Heart left ventricle (tissue), 16 donors: ENCODE measurements at regions of chr4 and their contacts with region 1.

Region 1: DNA sequence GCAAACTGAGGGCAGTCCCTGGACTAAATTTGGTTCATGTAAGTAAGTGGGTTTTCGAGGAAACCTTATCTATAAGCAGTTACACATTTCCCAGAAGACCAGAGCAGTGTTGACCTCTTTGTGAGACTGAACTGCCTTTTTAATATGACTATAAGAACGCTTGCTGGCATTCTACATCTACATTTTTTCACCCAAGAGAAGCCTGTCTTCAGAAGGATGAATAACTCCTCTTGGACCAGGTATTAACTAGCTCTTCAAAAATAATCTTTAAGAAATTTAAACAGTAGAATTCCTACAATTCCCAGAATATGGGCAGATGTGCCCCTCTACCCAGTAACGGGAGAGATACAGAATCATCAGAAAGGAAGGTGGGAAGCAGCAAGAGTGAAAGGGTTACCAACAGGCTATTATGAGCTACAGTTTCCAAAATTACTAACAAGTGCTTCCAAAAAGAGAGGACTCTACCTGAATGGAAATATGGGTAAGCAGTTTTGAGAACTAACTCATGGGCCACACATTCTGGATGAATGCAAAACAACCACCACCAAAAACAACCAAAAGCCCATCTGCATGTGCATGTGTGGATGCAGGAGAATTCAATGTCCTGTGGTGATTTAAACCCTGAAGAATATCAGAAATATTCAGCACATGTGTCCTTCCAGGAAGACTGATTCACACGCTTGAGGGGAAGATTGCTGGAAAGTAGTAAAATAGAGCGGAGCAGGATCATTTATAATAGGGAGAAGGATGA is 17.4 kb downstream of the BBS12 start:
- DNase-seq: no peak
- ATAC-seq: no peak
- H3K4me3 ChIP-seq: no peak overlapping the region
- H3K27ac ChIP-seq: no peak overlapping the region
- H3K4me1 ChIP-seq: peaks cover 0 to 14% (median 0%) of the 10 kb centered on the region in 12 donors
- H3K27me3 ChIP-seq: peaks cover 0 to 6% (median 0%) of the 10 kb centered on the region in 9 donors
- CTCF ChIP-seq: no peak
- POLR2A ChIP-seq: no peak

Region 2: GRCh38 chr4:122898370-122899150 is 148.7 kb after region 1 on chr4:
- intact Hi-C with region 1: no loop called
- DNase-seq: no peak
- ATAC-seq: peak in 1 of 4 donors; percentile 64
- H3K4me3 ChIP-seq: no peak overlapping the region
- H3K27ac ChIP-seq: no peak overlapping the region
- H3K4me1 ChIP-seq: peaks cover 0 to 6% (median 0%) of the 10 kb centered on the region in 12 donors
- H3K27me3 ChIP-seq: no peaks in the 10 kb centered on the region
- CTCF ChIP-seq: no peak
- POLR2A ChIP-seq: no peak

Region 3: DNA sequence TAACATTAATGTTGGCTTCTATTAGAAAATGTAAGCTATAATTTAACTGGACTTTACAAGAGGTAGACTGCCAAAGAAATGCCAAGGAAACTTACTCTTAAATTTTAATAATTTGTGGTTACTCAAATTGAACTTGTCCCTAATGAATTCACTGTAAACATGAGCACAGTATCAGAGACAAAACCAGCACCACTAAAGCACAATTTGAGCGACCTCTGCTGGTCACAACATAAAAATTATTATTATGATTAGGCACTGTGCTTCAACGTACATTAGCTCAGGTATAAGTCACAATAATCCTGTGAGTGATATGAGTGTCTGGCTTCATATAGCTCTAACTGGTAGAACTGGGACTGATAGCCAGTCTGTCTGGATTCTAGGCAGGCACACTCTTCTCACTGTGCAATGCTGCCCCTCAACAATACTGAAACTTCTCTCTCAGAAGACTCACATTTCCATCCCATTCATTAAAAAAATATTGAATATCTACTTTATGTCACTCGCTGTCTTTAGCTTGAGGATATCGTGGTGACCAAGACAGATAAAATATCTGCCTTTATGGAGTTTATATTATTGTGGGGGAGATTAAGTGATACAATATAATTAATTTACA is 164.5 kb after region 1 on chr4:
- intact Hi-C with region 1: loop called in 4 of 10 experiments (anchors 5 kb)
- DNase-seq: no peak
- ATAC-seq: peak in 2 of 4 donors; percentile 46 to 52
- H3K4me3 ChIP-seq: no peak overlapping the region
- H3K27ac ChIP-seq: no peak overlapping the region
- H3K4me1 ChIP-seq: no peaks in the 10 kb centered on the region
- H3K27me3 ChIP-seq: no peaks in the 10 kb centered on the region
- CTCF ChIP-seq: peak in 11 of 12 donors; percentile 13 to 62 (median 37)
- POLR2A ChIP-seq: no peak

Region 4: DNA sequence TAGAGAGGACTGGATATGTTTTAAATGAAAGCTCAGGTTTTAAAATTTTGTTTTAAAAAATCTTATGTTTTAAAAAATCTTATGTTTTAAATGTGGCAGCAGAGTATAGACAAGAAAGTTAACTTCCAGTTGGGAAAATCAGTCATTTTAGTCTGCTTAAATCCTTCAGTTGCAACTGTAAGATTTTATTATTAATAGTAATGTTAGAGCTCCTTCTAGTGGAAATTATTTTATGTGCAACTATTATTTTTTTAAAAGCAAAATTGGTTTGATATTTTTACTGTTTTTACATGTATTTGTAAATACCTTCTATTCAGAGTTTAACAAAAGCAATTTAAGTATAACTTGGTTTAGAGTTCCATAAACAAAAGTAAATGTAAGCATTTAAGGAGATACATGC is 181.0 kb after region 1 on chr4:
- intact Hi-C with region 1: loop called in 1 of 10 experiments (anchors 5 kb)
- DNase-seq: no peak
- ATAC-seq: no peak
- H3K4me3 ChIP-seq: no peak overlapping the region
- H3K27ac ChIP-seq: no peak overlapping the region
- H3K4me1 ChIP-seq: no peaks in the 10 kb centered on the region
- H3K27me3 ChIP-seq: no peaks in the 10 kb centered on the region
- CTCF ChIP-seq: peak; percentile 48 to 78 (median 64)
- POLR2A ChIP-seq: no peak